HCT116 (cell line): ENCODE measurements at regions of chr12 and their contacts with region 1.

Region 1: DNA sequence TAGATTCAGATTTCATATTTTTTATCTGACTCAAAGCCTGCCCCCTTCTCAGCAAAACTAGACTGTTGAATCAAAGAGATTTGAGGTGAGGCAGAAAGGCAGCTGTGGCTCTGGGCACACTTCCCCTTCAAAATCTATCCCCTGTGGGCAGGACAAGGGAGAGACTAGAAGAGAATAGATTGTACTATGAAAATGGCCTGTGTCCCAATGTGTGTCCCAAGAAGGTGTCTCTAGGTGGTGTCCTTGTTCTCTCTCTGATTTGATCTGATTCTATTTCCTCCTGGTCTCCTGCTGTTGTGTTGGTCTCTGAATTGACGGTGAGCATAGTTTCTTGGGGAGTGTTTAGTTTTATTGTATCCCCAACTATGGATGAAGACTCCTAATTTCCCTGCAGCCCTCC is 565.8 kb upstream of the ATP2B1 start:
- DNase-seq: no peak
- ATAC-seq: 0 out of 2 replicates have a peak, but pooled peaks have one; percentile 32
- H3K4me3 ChIP-seq: no peak overlapping the region
- H3K27ac ChIP-seq: no peak overlapping the region
- H3K4me1 ChIP-seq: no peaks in the 10 kb centered on the region
- H3K27me3 ChIP-seq: no peaks in the 10 kb centered on the region
- CTCF ChIP-seq: peak in 1 of 3 experiments; percentile 14; a peak in 1 of 6 replicates
- POLR2A ChIP-seq: no peak
- RAD21 ChIP-seq: peak; percentile 52

Region 2: DNA sequence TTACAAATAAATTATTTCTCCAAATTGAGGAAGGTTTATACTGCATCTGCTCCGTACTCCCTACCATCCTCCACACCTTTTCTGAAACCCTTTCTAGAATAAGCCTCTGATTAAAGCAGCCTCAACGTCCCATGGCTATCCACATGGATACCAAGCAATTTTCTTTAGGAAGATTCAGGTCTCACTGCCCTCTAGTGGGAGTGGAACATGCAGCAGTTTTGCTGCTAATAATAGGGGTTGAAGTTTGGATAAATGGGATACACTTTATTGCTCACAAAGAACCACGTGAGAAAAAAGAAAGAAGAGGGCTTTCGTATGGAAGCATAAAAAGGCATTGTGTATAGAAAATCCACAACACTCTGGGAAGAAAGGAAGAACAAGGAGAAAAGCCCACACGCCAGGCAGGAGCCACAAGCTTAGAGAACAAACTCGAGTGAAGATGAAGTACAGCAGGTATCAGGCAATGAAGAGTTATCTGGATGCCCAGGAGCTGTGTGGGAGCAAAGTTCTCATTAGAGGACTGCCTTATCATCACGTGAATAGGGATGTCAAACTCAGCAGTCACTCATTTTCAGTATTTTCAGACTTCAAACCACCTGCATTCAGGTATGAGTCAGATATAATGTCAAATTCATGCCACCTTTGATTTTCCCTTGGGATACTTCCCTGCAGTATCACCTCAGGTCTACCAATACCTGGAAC is 634.8 kb after region 1 on chr12:
- CTCF ChIA-PET with region 1: no interaction called
- POLR2A ChIA-PET with region 1: no interaction called
- RAD21 ChIA-PET with region 1: no interaction called
- intact Hi-C with region 1: loop called (anchors 10 kb)
- DNase-seq: peak; percentile 38
- ATAC-seq: peak; percentile 91
- H3K4me3 ChIP-seq: no peak overlapping the region
- H3K27ac ChIP-seq: no peak overlapping the region
- H3K4me1 ChIP-seq: no peaks in the 10 kb centered on the region
- H3K27me3 ChIP-seq: no peaks in the 10 kb centered on the region
- CTCF ChIP-seq: peak; percentile 50 to 86 (median 78); a peak in 5 of 6 replicates
- POLR2A ChIP-seq: no peak
- RAD21 ChIP-seq: peak; percentile 72